H1 (cell line): ENCODE measurements at regions of chrX and their contacts with region 1.

Region 1: GRCh38 chrX:103845165-103845653 is 13.2 kb upstream of the RAB9B start:
- DNase-seq: peak; percentile 29 to 62
- H3K4me3 ChIP-seq: no peak overlapping the region
- H3K27ac ChIP-seq: no peak overlapping the region
- H3K4me1 ChIP-seq: no peaks in the 10 kb centered on the region
- H3K27me3 ChIP-seq: no peaks in the 10 kb centered on the region
- CTCF ChIP-seq: peak; percentile 22 to 69 (median 56)
- EP300 ChIP-seq: no peak
- POLR2A ChIP-seq: no peak
- RAD21 ChIP-seq: peak; percentile 66 to 72

Region 2: DNA sequence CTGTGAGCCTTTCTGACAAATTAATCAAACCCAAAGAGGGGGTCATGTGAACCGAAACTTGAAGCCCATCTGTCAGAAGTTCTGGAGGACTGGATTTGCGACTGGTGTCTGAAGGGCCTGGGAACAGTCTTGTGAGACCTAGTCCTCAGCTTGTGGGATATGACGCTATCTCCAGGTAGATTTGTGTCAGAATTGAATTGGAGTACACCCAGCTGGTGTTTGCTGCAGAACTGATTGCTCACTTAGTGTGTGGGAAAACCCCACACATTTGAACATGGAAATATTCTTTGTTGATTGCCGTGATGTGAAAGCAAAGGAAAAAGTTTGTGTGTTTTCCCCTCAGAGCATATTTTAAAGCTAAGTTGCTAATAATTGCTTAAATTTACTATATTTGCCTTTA is 86.9 kb after region 1 on chrX:
- CTCF ChIA-PET with region 1: interaction called, 14 read pairs
- POLR2A ChIA-PET with region 1: no interaction called
- DNase-seq: no peak
- H3K4me3 ChIP-seq: no peak overlapping the region
- H3K27ac ChIP-seq: no peak overlapping the region
- H3K4me1 ChIP-seq: no peaks in the 10 kb centered on the region
- H3K27me3 ChIP-seq: no peaks in the 10 kb centered on the region
- CTCF ChIP-seq: no peak
- EP300 ChIP-seq: no peak
- POLR2A ChIP-seq: no peak
- RAD21 ChIP-seq: no peak

Region 3: DNA sequence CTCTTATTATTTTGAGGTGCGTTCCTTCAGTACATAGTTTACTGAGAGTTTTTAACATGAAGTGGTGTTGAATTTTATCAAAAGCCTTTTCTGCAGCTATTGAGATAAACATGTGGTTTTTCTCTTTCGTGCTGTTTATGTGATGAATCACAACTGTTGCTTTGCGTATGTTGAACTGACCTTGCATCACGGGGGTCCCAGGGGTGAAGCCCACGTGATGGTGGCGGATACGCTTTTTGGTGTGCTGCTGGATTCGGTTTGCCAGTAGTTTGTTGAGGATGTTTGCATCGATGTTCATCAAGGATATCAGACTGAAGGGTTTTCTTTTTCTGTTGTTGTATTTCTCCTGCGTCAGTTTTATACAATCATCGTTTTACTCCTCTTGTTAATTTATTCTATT is 172.9 kb after region 1 on chrX:
- CTCF ChIA-PET with region 1: no interaction called
- POLR2A ChIA-PET with region 1: no interaction called
- DNase-seq: no peak
- H3K4me3 ChIP-seq: no peak overlapping the region
- H3K27ac ChIP-seq: no peak overlapping the region
- H3K4me1 ChIP-seq: no peaks in the 10 kb centered on the region
- H3K27me3 ChIP-seq: no peaks in the 10 kb centered on the region
- CTCF ChIP-seq: no peak
- EP300 ChIP-seq: no peak
- POLR2A ChIP-seq: no peak
- RAD21 ChIP-seq: no peak